ENCODE measurements at regions of chr5 and their contacts with region 1.

Region 1: DNA sequence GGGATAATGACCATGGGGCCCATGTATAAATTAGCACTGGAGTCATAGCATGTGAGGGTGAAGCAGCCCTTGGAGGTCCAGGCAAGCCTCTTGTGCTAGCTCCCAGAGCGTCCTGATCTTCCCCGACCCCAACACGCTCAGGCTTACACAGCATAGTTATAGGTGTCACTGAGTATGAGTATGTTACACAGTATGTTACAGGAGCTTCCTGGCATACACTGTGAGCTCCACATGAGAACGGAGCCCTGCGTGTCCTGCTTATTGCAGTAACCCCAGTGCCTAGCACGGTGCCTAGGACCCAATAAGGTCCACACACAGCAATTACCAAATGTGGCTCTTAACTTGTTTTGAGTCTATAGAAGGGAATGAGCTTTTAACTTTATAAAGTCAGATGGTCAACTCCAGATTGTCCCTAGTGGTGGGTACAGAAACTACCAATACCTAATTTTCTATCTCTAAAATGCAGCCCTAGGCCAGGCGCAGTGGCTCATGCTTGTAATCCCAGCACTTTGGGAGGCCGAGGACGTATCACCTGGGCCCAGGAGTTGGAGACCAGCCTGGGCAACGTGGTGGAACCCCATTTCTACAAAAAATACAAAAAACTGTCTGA is 64.1 kb downstream of the PLAC8L1 start:
- DNase-seq: no peak
- H3K4me3 ChIP-seq: no peak overlapping the region
- H3K27ac ChIP-seq: no peak overlapping the region
- H3K4me1 ChIP-seq: no peaks in the 10 kb centered on the region
- H3K27me3 ChIP-seq: no peaks in the 10 kb centered on the region
- CTCF ChIP-seq: peak in 2 of 3 experiments; percentile 34 to 52; a peak in 2 of 4 replicates
- EP300 ChIP-seq: no peak
- POLR2A ChIP-seq: no peak
- RAD21 ChIP-seq: peak; percentile 37 to 41

Region 2: DNA sequence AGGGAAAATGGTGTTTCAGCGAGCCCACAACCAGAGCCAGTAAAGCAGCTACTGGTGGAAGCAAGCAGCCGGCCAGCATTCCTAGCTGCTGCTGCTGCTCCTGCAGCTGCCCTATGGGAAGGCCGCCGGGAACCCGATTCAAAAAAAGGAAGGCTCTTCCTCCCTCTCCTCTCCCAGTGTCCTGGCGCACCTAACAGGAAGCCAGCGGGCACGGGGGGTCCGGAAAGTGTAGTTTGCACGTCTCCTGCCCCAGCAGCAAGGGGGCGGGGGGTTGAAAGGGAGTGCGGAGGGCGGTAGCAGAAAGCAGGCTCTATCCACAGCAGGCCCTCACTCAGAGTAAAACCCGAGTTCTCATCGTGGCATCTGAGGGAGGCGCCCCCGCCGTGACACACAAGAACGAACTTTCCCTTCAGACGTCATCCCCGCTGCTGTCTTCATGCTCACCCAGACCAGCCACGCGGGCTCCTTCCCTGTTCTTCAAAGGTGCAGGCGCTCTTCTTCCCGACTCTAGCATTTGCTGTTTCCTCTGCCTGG is 184.9 kb before region 1 on chr5:
- CTCF ChIA-PET with region 1: interaction called, 23 read pairs
- POLR2A ChIA-PET with region 1: no interaction called
- DNase-seq: peak; percentile 36 to 81
- H3K4me3 ChIP-seq: peak overlapping the region; percentile 48 to 59 (median 56)
- H3K27ac ChIP-seq: peak overlapping the region; percentile 45; the same call in 1 of the 2 replicates
- H3K4me1 ChIP-seq: peaks cover 3 to 5% (median 3%) of the 10 kb centered on the region in 4 experiments; a peak in 5 of 7 replicates
- H3K27me3 ChIP-seq: no peaks in the 10 kb centered on the region
- CTCF ChIP-seq: no peak
- EP300 ChIP-seq: no peak
- POLR2A ChIP-seq: peak in 1 of 2 experiments; percentile 36; a peak in 1 of 3 replicates
- RAD21 ChIP-seq: peak in 1 of 2 experiments; percentile 8; a peak in 1 of 4 replicates

Region 3: DNA sequence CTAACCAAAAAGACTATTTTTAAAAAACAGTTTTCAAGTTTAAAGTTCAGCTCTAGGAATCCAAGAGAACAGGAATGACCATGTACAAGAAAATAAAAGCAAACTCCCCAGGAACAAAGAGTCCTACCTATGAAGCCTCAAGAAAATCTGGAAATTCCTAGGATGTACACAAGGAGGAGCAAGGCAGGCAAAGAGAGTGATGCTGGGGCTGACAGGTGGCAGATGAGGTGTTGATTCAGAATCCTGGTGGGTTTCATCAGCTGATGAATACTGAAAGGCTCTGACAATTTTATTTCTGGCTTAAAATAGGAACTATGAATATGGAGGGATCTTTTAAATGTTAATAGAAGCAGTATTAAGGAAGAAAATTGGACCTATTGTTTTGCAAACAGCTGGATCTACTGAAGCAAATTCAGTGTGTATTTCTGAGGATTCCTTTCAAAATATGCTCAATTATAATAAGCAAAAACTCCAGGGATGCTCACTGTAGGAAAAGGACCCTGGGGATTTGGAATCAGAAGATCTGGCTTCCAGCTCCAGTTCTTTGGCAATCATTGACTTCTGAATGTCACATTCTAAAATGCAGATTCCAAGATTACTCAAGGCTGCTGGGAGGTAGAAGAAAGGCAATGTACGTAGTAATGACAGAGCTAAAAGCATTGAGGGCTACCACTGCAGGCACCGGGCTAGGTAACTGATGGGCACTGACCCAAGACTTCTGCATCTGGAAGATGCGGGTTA is 132.9 kb before region 1 on chr5:
- CTCF ChIA-PET with region 1: interaction called, 31 read pairs
- POLR2A ChIA-PET with region 1: no interaction called
- DNase-seq: no peak
- H3K4me3 ChIP-seq: no peak overlapping the region
- H3K27ac ChIP-seq: no peak overlapping the region
- H3K4me1 ChIP-seq: no peaks in the 10 kb centered on the region
- H3K27me3 ChIP-seq: no peaks in the 10 kb centered on the region
- CTCF ChIP-seq: peak in 2 of 3 experiments; percentile 38 to 51; a peak in 3 of 4 replicates
- EP300 ChIP-seq: no peak
- POLR2A ChIP-seq: no peak
- RAD21 ChIP-seq: peak; percentile 51 to 66

Region 4: DNA sequence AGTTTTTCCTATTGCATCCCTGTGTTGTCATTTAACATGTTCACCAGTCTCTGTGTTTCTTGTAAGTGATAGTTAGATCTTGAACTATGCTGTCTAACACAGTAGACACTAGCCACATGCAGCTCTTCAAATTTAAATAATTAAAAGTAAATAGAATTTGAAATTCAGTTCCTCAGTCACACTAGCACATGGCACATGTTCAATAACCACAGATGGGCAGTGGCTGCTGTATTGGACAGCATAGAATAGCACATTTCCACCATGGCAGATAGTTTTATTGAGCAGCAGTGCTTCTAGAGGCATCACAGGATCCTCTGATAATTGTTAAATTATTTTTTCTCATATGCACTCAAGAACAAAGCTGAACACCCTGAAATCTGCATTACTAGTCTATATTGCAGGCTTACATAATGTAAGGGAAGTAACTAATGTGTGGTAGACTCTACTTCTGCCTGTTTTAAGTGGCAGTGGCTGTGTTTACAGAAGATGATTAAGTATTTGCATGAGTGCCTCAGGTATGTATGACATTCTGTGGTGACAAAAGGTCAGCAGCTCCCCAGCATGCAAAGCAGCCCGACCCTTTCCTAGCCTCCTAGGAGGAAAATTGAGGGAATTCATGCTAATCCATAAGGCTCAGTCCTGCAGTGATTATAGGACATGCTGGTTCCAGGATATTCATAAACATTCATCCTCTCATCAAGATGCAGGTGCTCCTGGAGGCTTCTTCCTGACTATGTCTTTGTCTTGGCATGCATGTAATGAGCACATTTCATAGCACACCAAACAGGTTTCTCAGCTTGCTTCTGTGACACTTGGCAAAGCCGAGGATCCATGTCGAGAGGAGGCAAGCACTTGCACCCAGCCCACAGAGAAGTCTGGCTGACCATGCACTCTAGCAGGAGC is 59.4 kb before region 1 on chr5:
- CTCF ChIA-PET with region 1: interaction called, 19 read pairs
- POLR2A ChIA-PET with region 1: no interaction called
- DNase-seq: no peak
- H3K4me3 ChIP-seq: no peak overlapping the region
- H3K27ac ChIP-seq: no peak overlapping the region
- H3K4me1 ChIP-seq: peaks cover 0 to 7% (median 3%) of the 10 kb centered on the region in 4 experiments; a peak in 2 of 7 replicates
- H3K27me3 ChIP-seq: no peaks in the 10 kb centered on the region
- CTCF ChIP-seq: no peak
- EP300 ChIP-seq: no peak
- POLR2A ChIP-seq: no peak
- RAD21 ChIP-seq: no peak

Region 5: GRCh38 chr5:146059460-146060220 is 18.4 kb after region 1 on chr5:
- CTCF ChIA-PET with region 1: interaction called, 28 read pairs
- POLR2A ChIA-PET with region 1: no interaction called
- DNase-seq: no peak
- H3K4me3 ChIP-seq: no peak overlapping the region
- H3K27ac ChIP-seq: no peak overlapping the region
- H3K4me1 ChIP-seq: no peaks in the 10 kb centered on the region
- H3K27me3 ChIP-seq: no peaks in the 10 kb centered on the region; a peak in 1 of 7 replicates
- CTCF ChIP-seq: no peak
- EP300 ChIP-seq: no peak
- POLR2A ChIP-seq: no peak
- RAD21 ChIP-seq: no peak

Region 6: DNA sequence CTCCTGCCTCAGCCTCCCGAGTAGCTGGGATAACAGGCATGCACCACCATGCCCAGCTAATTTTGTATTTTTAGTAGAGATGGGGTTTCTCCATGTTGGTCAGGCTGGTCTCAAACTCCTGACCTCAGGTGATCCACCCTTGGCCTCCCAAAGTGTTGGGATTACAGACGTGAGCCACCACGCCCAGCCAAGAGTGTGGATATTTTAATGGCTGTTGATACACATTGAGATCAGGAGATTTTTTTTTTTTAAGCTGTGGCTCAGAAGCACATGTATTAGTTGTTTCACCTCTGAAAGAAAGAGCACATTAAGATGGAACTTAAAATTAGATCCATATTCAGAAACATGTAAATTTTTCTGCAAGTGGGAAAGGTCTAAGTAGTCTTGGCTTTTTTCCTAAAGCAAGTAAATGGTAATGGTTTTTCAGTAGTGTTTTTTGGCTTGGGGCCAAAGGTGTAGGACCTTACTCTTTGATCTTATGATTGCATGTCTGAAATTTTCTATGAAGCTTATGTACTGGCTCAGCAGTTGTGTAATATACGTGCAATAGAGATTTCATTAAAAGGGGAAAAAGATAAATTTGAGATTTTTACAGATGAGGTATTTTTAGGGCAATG is 172.0 kb after region 1 on chr5:
- CTCF ChIA-PET with region 1: no interaction called
- POLR2A ChIA-PET with region 1: no interaction called
- DNase-seq: no peak
- H3K4me3 ChIP-seq: no peak overlapping the region
- H3K27ac ChIP-seq: no peak overlapping the region
- H3K4me1 ChIP-seq: no peaks in the 10 kb centered on the region
- H3K27me3 ChIP-seq: no peaks in the 10 kb centered on the region
- CTCF ChIP-seq: no peak
- EP300 ChIP-seq: no peak
- POLR2A ChIP-seq: no peak
- RAD21 ChIP-seq: no peak